ENCODE measurements at regions of chr9 and their contacts with region 1.

Region 1: GRCh38 chr9:71285191-71285656 is 163.8 kb upstream of the TRPM3 start:
- DNase-seq: peak; percentile 23 to 68
- ATAC-seq: peak; percentile 83 to 93; a peak in 5 of 6 replicates
- H3K4me3 ChIP-seq: no peak overlapping the region
- H3K27ac ChIP-seq: no peak overlapping the region
- H3K4me1 ChIP-seq: no peaks in the 10 kb centered on the region
- CTCF ChIP-seq: peak; percentile 89
- EP300 ChIP-seq: no peak
- POLR2A ChIP-seq: no peak
- RAD21 ChIP-seq: peak; percentile 90 to 91

Region 2: GRCh38 chr9:71295928-71296327 is 10.7 kb after region 1 on chr9:
- CTCF ChIA-PET with region 1: interaction called, 19 read pairs
- POLR2A ChIA-PET with region 1: no interaction called
- DNase-seq: no peak
- ATAC-seq: no peak
- H3K4me3 ChIP-seq: no peak overlapping the region
- H3K27ac ChIP-seq: no peak overlapping the region
- H3K4me1 ChIP-seq: no peaks in the 10 kb centered on the region
- CTCF ChIP-seq: no peak
- EP300 ChIP-seq: no peak
- POLR2A ChIP-seq: no peak
- RAD21 ChIP-seq: no peak

Region 3: DNA sequence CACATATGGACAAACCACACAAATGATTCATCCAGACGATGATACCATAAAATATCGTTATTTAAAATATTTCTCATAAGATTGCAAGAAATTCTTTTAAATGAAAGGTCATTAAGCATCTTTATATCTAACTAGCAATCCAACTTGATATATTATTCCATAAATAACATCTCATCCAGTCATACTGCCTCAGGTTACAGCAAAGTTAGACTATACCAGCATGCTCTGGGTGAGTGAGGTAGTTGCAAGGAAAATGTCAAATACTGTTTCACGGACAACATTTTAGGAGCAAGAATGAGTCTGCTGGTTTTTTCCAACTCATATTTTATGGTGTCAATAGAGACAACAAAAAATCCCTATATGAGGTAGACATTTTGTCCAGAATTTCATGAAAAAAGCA is 37.1 kb after region 1 on chr9:
- CTCF ChIA-PET with region 1: no interaction called
- POLR2A ChIA-PET with region 1: no interaction called
- DNase-seq: no peak
- ATAC-seq: no peak
- H3K4me3 ChIP-seq: no peak overlapping the region
- H3K27ac ChIP-seq: no peak overlapping the region
- H3K4me1 ChIP-seq: no peaks in the 10 kb centered on the region
- CTCF ChIP-seq: no peak
- EP300 ChIP-seq: no peak
- POLR2A ChIP-seq: no peak
- RAD21 ChIP-seq: no peak

Region 4: GRCh38 chr9:71544464-71544863 is 259.2 kb after region 1 on chr9:
- CTCF ChIA-PET with region 1: no interaction called
- POLR2A ChIA-PET with region 1: no interaction called
- DNase-seq: no peak
- ATAC-seq: no peak
- H3K4me3 ChIP-seq: no peak overlapping the region
- H3K27ac ChIP-seq: no peak overlapping the region
- H3K4me1 ChIP-seq: 0 out of 3 replicates have a peak, but pooled peaks cover 4% of the 10 kb centered on the region
- CTCF ChIP-seq: no peak
- EP300 ChIP-seq: no peak
- POLR2A ChIP-seq: no peak
- RAD21 ChIP-seq: no peak

Region 5: DNA sequence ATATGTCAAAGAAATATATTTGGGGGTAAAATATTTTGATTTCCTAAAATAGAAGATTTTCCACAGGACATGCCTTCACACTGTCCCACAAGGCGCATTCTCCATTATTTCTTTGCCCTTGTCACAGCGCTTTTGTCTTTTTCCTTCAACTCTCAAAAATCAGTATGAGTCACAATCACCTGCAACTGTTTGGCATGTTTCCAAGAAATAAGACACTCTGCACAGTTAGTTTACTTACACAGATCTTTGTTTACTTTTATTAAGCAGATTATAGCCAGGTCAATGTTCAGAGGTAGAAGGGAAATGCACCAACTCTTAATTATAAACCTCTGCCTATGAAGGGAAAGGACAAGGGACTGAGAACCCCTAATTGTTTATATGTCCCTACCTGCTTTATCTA is 473.6 kb after region 1 on chr9:
- CTCF ChIA-PET with region 1: interaction called, 14 read pairs
- POLR2A ChIA-PET with region 1: no interaction called
- DNase-seq: peak in 1 of 2 experiments; percentile 65
- ATAC-seq: no peak
- H3K4me3 ChIP-seq: peak overlapping the region; percentile 18; the same call in 1 of the 3 replicates
- H3K27ac ChIP-seq: peak overlapping the region; percentile 67 to 91
- H3K4me1 ChIP-seq: peaks cover 97% of the 10 kb centered on the region
- CTCF ChIP-seq: no peak
- EP300 ChIP-seq: no peak
- POLR2A ChIP-seq: no peak
- RAD21 ChIP-seq: 0 out of 5 replicates have a peak, but pooled peaks of 1 of the 2 experiments have one; percentile 11

Region 6: GRCh38 chr9:71830153-71830552 is 544.9 kb after region 1 on chr9:
- CTCF ChIA-PET with region 1: interaction called, 12 read pairs
- POLR2A ChIA-PET with region 1: no interaction called
- DNase-seq: no peak
- ATAC-seq: no peak
- H3K4me3 ChIP-seq: no peak overlapping the region
- H3K27ac ChIP-seq: no peak overlapping the region
- H3K4me1 ChIP-seq: peaks cover 10% of the 10 kb centered on the region
- CTCF ChIP-seq: no peak
- EP300 ChIP-seq: no peak
- POLR2A ChIP-seq: no peak
- RAD21 ChIP-seq: no peak

Region 7: DNA sequence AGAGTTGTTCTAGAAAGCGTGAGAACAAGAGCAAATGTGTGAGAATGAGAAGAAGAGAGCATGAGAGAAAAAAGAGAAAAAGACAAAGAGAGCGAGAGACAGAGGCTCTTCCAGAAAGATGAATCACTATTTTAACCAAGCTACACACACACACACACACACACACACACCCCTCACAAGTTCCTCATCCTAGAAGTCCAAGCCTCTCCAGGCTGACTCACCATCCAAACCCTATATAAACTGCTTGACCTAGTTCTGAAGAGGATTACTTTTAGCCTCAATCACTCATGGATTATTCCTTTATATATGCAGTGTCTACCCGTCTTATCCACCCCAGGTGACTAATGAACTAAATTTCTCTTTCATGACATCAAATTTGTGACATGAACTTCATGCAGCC is 737.6 kb after region 1 on chr9:
- CTCF ChIA-PET with region 1: interaction called, 26 read pairs
- POLR2A ChIA-PET with region 1: no interaction called
- DNase-seq: peak in 1 of 2 experiments; percentile 58
- ATAC-seq: peak in 1 of 2 experiments; percentile 49; a peak in 2 of 6 replicates
- H3K4me3 ChIP-seq: no peak overlapping the region
- H3K27ac ChIP-seq: no peak overlapping the region
- H3K4me1 ChIP-seq: peaks cover 10% of the 10 kb centered on the region; the same call in 2 of the 3 replicates
- CTCF ChIP-seq: no peak
- EP300 ChIP-seq: no peak
- POLR2A ChIP-seq: no peak
- RAD21 ChIP-seq: no peak